ENCODE measurements at regions of chr2 and their contacts with region 1.

Region 1: GRCh38 chr2:43226558-43226954 is at the start of gene ZFP36L2:
- DNase-seq: peak; percentile 92 to 99 (median 97)
- H3K4me3 ChIP-seq: peak within 1 kb of the TSS; percentile 76 to 88
- H3K4me3 Mint-ChIP-seq: peak within 1 kb of the TSS; percentile 91 to 99 (median 96)
- H3K27ac ChIP-seq: peak within 1 kb of the TSS; percentile 90
- H3K27ac Mint-ChIP-seq: peak within 1 kb of the TSS; percentile 92 to 98 (median 95)
- H3K4me1 ChIP-seq: peaks cover 26% of the 10 kb centered on the region
- H3K4me1 Mint-ChIP-seq: peaks cover 18 to 46% (median 26%) of the 10 kb centered on the region in 4 donors
- H3K27me3 ChIP-seq: no peaks in the 10 kb centered on the region
- H3K27me3 Mint-ChIP-seq: peaks cover 0 to 2% of the 10 kb centered on the region in 2 donors
- total RNA-seq, gene ZFP36L2: 456 to 464 TPM

Region 2: GRCh38 chr2:42944779-42945415 is 281.7 kb before region 1 on chr2:
- CTCF ChIA-PET with region 1: interaction called, 16 read pairs
- POLR2A ChIA-PET with region 1: interaction called, 6 read pairs
- intact Hi-C with region 1: loop called (anchors 1 kb)
- DNase-seq: no peak
- H3K4me3 ChIP-seq: no peak overlapping the region
- H3K4me3 Mint-ChIP-seq: no peak overlapping the region
- H3K27ac ChIP-seq: no peak overlapping the region
- H3K27ac Mint-ChIP-seq: no peak overlapping the region
- H3K4me1 ChIP-seq: no peaks in the 10 kb centered on the region
- H3K4me1 Mint-ChIP-seq: peaks cover 0 to 2% (median under 1%) of the 10 kb centered on the region in 4 donors
- H3K27me3 ChIP-seq: no peaks in the 10 kb centered on the region
- H3K27me3 Mint-ChIP-seq: no peaks in the 10 kb centered on the region

Region 3: DNA sequence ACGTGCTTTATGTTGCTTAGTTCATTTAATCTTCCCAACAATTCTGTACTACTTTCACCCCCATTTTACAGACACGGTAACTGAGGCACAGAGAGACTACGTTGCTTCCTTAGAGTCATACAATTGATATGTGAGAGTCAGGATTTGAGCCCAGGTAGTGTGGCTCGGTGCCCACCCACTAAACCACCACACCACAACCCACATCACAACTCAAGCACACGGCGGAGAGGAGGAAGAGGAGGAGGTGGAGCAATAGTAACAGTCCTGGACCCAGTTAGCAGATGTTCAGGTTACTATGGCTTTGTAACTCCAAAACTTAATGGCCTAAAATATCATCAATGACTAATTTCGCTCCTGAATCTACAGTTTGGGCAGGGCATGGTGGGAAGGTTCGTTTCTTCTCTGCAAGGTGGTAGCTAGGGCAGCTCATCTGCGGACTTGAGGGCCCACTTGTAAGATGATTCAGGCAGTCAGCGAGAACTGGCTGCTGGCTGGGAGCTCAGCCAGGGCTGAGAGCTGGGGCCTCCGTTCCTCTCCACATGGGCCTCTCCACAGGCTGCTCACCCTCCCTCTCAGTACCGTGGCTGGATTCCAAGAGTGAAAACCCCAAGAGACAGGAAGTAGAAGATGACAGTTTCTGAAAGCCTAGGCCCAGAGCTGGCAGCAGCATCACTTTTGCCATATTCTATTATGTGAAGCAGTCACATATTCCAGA is 167.2 kb before region 1 on chr2:
- CTCF ChIA-PET with region 1: no interaction called
- POLR2A ChIA-PET with region 1: interaction called, 16 read pairs
- intact Hi-C with region 1: no loop called
- DNase-seq: peak; percentile 62 to 80 (median 68)
- H3K4me3 ChIP-seq: peak overlapping the region in 1 of 2 donors; percentile 4
- H3K4me3 Mint-ChIP-seq: peak overlapping the region in 7 of 8 donors; percentile 57 to 77 (median 72)
- H3K27ac ChIP-seq: peak overlapping the region; percentile 51
- H3K27ac Mint-ChIP-seq: peak overlapping the region; percentile 80 to 94 (median 91)
- H3K4me1 ChIP-seq: peaks cover 27% of the 10 kb centered on the region
- H3K4me1 Mint-ChIP-seq: peaks cover 23 to 40% (median 31%) of the 10 kb centered on the region in 4 donors
- H3K27me3 ChIP-seq: no peaks in the 10 kb centered on the region
- H3K27me3 Mint-ChIP-seq: no peaks in the 10 kb centered on the region

Region 4: GRCh38 chr2:43169987-43170386 is 56.6 kb before region 1 on chr2:
- CTCF ChIA-PET with region 1: interaction called, 319 read pairs
- POLR2A ChIA-PET with region 1: interaction called, 6,960 read pairs
- intact Hi-C with region 1: loop called (anchors 1 kb)
- DNase-seq: peak; percentile 66 to 74 (median 69)
- H3K4me3 ChIP-seq: peak overlapping the region in 1 of 2 donors; percentile 42
- H3K4me3 Mint-ChIP-seq: peak overlapping the region; percentile 36 to 89 (median 82)
- H3K27ac ChIP-seq: peak overlapping the region; percentile 65
- H3K27ac Mint-ChIP-seq: peak overlapping the region; percentile 93 to 99 (median 98)
- H3K4me1 ChIP-seq: peaks cover 83% of the 10 kb centered on the region
- H3K4me1 Mint-ChIP-seq: peaks cover 49 to 85% (median 70%) of the 10 kb centered on the region in 4 donors
- H3K27me3 ChIP-seq: no peaks in the 10 kb centered on the region
- H3K27me3 Mint-ChIP-seq: no peaks in the 10 kb centered on the region

Region 5: GRCh38 chr2:43293744-43294695 is 67.5 kb after region 1 on chr2:
- CTCF ChIA-PET with region 1: no interaction called
- POLR2A ChIA-PET with region 1: no interaction called
- intact Hi-C with region 1: no loop called
- DNase-seq: peak in 1 of 5 donors; percentile 43
- H3K4me3 ChIP-seq: no peak overlapping the region
- H3K4me3 Mint-ChIP-seq: no peak overlapping the region
- H3K27ac ChIP-seq: no peak overlapping the region
- H3K27ac Mint-ChIP-seq: peak overlapping the region in 3 of 7 donors; percentile 24 to 45 (median 29)
- H3K4me1 ChIP-seq: peaks cover 8% of the 10 kb centered on the region
- H3K4me1 Mint-ChIP-seq: peaks cover 11 to 20% (median 12%) of the 10 kb centered on the region in 4 donors
- H3K27me3 ChIP-seq: no peaks in the 10 kb centered on the region
- H3K27me3 Mint-ChIP-seq: no peaks in the 10 kb centered on the region

Region 6: DNA sequence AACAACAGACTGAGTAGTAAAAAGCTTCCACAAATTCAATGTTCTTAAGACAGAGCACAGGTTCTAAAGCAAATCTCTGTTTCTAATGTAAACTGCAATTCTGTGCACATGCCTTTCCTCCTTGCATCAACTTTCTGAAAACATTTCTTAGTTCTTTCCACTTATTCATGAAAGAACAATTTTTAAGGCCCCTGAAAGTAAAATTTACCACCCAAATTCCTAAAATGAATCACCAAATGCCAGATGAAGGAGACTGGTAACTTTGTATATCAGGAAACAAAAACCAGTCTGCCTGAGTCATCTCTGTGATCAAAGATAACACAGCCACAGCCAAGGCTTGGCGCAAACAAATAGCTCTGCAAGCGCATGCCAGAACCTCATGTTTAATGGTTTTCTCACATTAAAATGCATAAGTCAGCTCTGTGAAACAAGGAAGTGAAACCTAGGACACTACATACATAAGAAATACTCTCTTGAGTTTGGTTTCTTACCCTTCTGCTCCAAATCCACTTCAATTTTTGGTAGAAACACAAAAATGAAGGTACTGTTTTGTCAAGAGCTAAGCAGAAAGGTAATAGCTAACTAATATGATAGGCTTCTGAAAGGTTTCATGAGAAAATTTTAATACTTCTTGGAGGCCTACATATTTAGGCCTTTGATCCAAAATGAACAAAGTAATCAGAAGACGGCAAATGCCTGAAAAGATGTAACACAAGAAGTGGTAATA is 199.9 kb after region 1 on chr2:
- CTCF ChIA-PET with region 1: interaction called, 7 read pairs
- POLR2A ChIA-PET with region 1: interaction called, 13 read pairs
- intact Hi-C with region 1: no loop called
- DNase-seq: peak; percentile 56 to 77 (median 61)
- H3K4me3 ChIP-seq: no peak overlapping the region
- H3K4me3 Mint-ChIP-seq: peak overlapping the region; percentile 1 to 81 (median 51)
- H3K27ac ChIP-seq: peak overlapping the region; percentile 20
- H3K27ac Mint-ChIP-seq: peak overlapping the region; percentile 3 to 92 (median 87)
- H3K4me1 ChIP-seq: peaks cover 39% of the 10 kb centered on the region
- H3K4me1 Mint-ChIP-seq: peaks cover 32 to 44% (median 37%) of the 10 kb centered on the region in 4 donors
- H3K27me3 ChIP-seq: no peaks in the 10 kb centered on the region
- H3K27me3 Mint-ChIP-seq: no peaks in the 10 kb centered on the region

Region 7: GRCh38 chr2:43595603-43596412 is 369.3 kb after region 1 on chr2 and contains the start of gene THADA:
- CTCF ChIA-PET with region 1: interaction called, 7 read pairs
- POLR2A ChIA-PET with region 1: interaction called, 6 read pairs
- intact Hi-C with region 1: loop called (anchors 5 kb)
- DNase-seq: peak; percentile 93 to 95 (median 95)
- H3K4me3 ChIP-seq: peak within 1 kb of the TSS; percentile 73 to 82
- H3K4me3 Mint-ChIP-seq: peak within 1 kb of the TSS; percentile 91 to 97 (median 96)
- H3K27ac ChIP-seq: peak within 1 kb of the TSS; percentile 89
- H3K27ac Mint-ChIP-seq: peak within 1 kb of the TSS; percentile 97 to 99 (median 99)
- H3K4me1 ChIP-seq: peaks cover 28% of the 10 kb centered on the region
- H3K4me1 Mint-ChIP-seq: peaks cover 22 to 44% (median 30%) of the 10 kb centered on the region in 4 donors
- H3K27me3 ChIP-seq: no peaks in the 10 kb centered on the region
- H3K27me3 Mint-ChIP-seq: no peaks in the 10 kb centered on the region
- total RNA-seq, gene THADA: 42.1 to 44.8 TPM